Activated CD4-positive, alpha-beta T cell treated with anti-CD3 and anti-CD28 coated beads for 36 hours (primary cell): ENCODE measurements at regions of chr7 and their contacts with region 1.

Region 1: DNA sequence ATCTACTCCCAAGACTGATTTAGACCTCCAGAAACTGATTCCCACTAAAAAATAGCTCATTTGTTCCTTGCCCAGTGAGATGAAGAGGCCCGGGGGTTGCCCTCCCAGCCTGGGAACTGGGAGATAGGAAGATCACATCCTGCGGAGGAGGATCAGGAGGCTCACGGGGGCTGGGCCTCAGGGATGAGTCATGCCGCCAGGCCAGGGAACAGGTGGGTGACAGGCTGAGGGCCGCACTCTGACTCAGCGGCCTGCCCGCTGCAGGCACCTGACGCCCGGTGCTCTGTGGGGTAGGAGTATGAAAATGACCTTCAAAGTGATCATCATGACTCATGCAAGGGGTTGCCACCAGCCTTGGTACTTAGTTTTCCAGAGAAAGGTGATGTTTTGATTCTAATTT is 104.5 kb upstream of the ZPBP start:
- DNase-seq: peak; percentile 91
- ATAC-seq: peak; percentile 96
- H3K4me3 Mint-ChIP-seq: peak overlapping the region; percentile 9
- H3K27ac Mint-ChIP-seq: peak overlapping the region; percentile 76
- H3K4me1 Mint-ChIP-seq: peaks cover 43% of the 10 kb centered on the region
- H3K27me3 Mint-ChIP-seq: no peaks in the 10 kb centered on the region

Region 2: GRCh38 chr7:50147951-50148808 is 49.4 kb before region 1 on chr7:
- CTCF ChIA-PET with region 1: interaction called, 43 read pairs
- POLR2A ChIA-PET with region 1: no interaction called
- intact Hi-C with region 1: loop called (anchors 1 to 2 kb)
- DNase-seq: peak; percentile 65
- ATAC-seq: peak; percentile 89
- H3K4me3 Mint-ChIP-seq: peak overlapping the region; percentile 40
- H3K27ac Mint-ChIP-seq: peak overlapping the region; percentile 90
- H3K4me1 Mint-ChIP-seq: peaks cover 85% of the 10 kb centered on the region
- H3K27me3 Mint-ChIP-seq: no peaks in the 10 kb centered on the region

Region 3: GRCh38 chr7:50156706-50157105 is 40.8 kb before region 1 on chr7:
- CTCF ChIA-PET with region 1: interaction called, 4 read pairs
- POLR2A ChIA-PET with region 1: no interaction called
- intact Hi-C with region 1: loop called (anchors 2 kb)
- DNase-seq: no peak
- ATAC-seq: no peak
- H3K4me3 Mint-ChIP-seq: peak overlapping the region; percentile 51
- H3K27ac Mint-ChIP-seq: peak overlapping the region; percentile 96
- H3K4me1 Mint-ChIP-seq: peaks cover 48% of the 10 kb centered on the region
- H3K27me3 Mint-ChIP-seq: no peaks in the 10 kb centered on the region

Region 4: GRCh38 chr7:50397320-50397970 is 199.9 kb after region 1 on chr7:
- CTCF ChIA-PET with region 1: interaction called, 3 read pairs
- POLR2A ChIA-PET with region 1: no interaction called
- intact Hi-C with region 1: loop called in 1 of 2 experiments (anchors 1 kb)
- DNase-seq: peak; percentile 63
- ATAC-seq: peak; percentile 12
- H3K4me3 Mint-ChIP-seq: peak overlapping the region; percentile 26
- H3K27ac Mint-ChIP-seq: peak overlapping the region; percentile 82
- H3K4me1 Mint-ChIP-seq: peaks cover 80% of the 10 kb centered on the region
- H3K27me3 Mint-ChIP-seq: no peaks in the 10 kb centered on the region

Region 5: GRCh38 chr7:51255536-51256208 is 1058.1 kb after region 1 on chr7:
- CTCF ChIA-PET with region 1: no interaction called
- POLR2A ChIA-PET with region 1: no interaction called
- intact Hi-C with region 1: no loop called
- DNase-seq: no peak
- ATAC-seq: no peak
- H3K4me3 Mint-ChIP-seq: no peak overlapping the region
- H3K27ac Mint-ChIP-seq: no peak overlapping the region
- H3K4me1 Mint-ChIP-seq: no peaks in the 10 kb centered on the region
- H3K27me3 Mint-ChIP-seq: no peaks in the 10 kb centered on the region